ENCODE measurements at regions of chr7 and their contacts with region 1.

Region 1: GRCh38 chr7:81990395-81990794 is 220.5 kb upstream of the HGF start:
- DNase-seq: no peak
- H3K4me3 ChIP-seq: no peak overlapping the region
- H3K27ac ChIP-seq: no peak overlapping the region
- H3K4me1 ChIP-seq: no peaks in the 10 kb centered on the region
- H3K27me3 ChIP-seq: no peaks in the 10 kb centered on the region
- CTCF ChIP-seq: no peak

Region 2: DNA sequence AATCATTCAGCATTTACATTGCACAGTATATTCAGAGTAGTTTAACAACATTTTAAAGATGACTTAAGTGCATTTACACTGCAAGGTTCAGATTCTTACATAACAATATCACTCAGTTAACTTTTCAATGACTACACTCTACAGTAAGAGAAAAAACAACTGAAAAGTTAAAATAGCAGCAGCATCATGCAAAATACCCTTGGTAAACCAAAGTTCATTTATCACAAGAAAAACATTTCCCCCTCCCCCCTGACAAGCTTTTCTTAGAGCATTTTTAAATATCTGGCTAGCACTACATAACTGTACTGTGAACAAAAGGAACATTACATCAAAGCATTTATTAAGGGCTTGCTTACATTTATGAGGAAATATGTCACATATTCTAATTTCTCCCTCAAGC is 41.1 kb before region 1 on chr7:
- CTCF ChIA-PET with region 1: no interaction called
- POLR2A ChIA-PET with region 1: no interaction called
- intact Hi-C with region 1: no loop called
- DNase-seq: no peak
- H3K4me3 ChIP-seq: no peak overlapping the region
- H3K27ac ChIP-seq: no peak overlapping the region
- H3K4me1 ChIP-seq: no peaks in the 10 kb centered on the region
- H3K27me3 ChIP-seq: no peaks in the 10 kb centered on the region
- CTCF ChIP-seq: no peak

Region 3: DNA sequence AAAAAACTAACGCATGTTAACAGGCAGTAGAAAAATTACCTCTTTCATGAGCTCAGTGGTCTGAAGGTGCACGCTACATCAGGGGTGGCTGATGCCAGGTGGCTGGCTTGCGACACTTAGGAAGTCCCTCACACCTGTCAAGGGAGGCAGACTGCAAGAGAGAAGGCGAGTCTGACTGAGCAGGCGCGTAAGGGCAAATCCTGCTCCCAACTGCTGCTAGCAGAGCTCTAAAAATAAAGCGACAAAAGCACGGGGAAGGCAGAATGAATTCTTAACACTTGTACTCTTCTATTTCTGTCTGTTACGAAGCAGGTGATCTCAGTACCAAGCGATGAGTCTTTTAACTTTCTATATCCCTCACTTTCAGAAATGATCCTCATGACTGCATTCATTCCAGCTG is 420.1 kb after region 1 on chr7:
- CTCF ChIA-PET with region 1: interaction called, 10 read pairs
- POLR2A ChIA-PET with region 1: no interaction called
- intact Hi-C with region 1: no loop called
- DNase-seq: no peak
- H3K4me3 ChIP-seq: no peak overlapping the region
- H3K27ac ChIP-seq: no peak overlapping the region
- H3K4me1 ChIP-seq: no peaks in the 10 kb centered on the region
- H3K27me3 ChIP-seq: no peaks in the 10 kb centered on the region
- CTCF ChIP-seq: no peak

Region 4: GRCh38 chr7:82559193-82559805 is 568.9 kb after region 1 on chr7:
- CTCF ChIA-PET with region 1: no interaction called
- POLR2A ChIA-PET with region 1: no interaction called
- intact Hi-C with region 1: no loop called
- DNase-seq: peak; percentile 37 to 63
- H3K4me3 ChIP-seq: peak overlapping the region; percentile 51
- H3K27ac ChIP-seq: no peak overlapping the region
- H3K4me1 ChIP-seq: peaks cover 8% of the 10 kb centered on the region; the same call in 1 of the 2 replicates
- H3K27me3 ChIP-seq: no peaks in the 10 kb centered on the region
- CTCF ChIP-seq: no peak

Measured in PC-9 (cell line).